Left colon (tissue), 2 donors: ENCODE measurements at regions of chr15 and their contacts with region 1.

Region 1: DNA sequence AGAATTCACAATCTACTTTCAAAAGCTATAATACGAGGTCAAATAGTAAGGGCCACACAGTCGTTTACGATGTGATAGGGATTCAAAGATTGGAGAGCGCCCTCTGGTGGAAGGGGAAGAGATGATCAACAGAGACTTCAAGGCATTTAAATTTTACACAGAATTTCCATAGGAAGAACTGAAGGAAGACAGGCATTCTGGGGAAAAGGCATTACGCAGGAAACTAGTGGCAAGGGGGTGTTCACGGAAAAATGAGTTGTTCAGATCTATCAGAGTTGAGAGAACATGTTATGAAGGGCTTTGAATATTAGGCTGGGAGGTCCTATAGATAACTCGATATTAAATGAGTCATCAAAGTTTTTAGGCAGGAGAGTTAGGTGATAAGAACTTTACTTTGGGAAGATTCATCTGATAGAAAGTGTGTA is 128.7 kb downstream of the FRMD5 start:
- DNase-seq: peak; percentile 38 to 69
- ATAC-seq: peak; percentile 75

Region 2: DNA sequence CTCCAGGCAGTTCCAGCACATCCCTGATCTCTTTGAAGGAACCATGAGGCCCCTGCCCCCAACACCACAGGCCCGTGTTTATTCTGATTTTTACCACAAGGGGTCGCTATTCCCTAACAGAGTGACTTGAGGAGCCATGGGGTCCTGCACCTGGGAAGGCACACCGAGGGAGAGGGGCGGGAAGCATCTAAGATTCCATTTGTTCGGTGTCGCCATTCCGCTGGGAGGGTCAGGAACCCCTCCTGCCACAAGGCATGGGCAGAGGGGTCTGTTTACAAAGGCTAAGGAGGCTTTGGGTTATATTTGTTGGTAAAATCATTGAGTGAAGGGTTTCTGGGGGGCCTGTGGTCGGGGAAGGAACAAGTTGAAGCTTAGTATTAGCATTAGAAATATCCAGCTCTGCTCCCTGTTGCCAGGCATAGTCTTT is 162.5 kb before region 1 on chr15:
- intact Hi-C with region 1: loop called in 1 of 2 experiments (anchors 5 kb)
- DNase-seq: peak in 1 of 2 donors; percentile 35
- ATAC-seq: peak; percentile 73

Region 3: GRCh38 chr15:43930079-43930478 is 136.2 kb before region 1 on chr15:
- intact Hi-C with region 1: no loop called
- DNase-seq: no peak
- ATAC-seq: no peak